ENCODE measurements at regions of chr22 and their contacts with region 1.

Region 1: GRCh38 chr22:24525416-24526037 is 29.4 kb downstream of the GUCD1 start:
- DNase-seq: peak; percentile 90
- ATAC-seq: peak; percentile 92
- H3K4me3 Mint-ChIP-seq: no peak overlapping the region
- H3K27ac Mint-ChIP-seq: no peak overlapping the region
- H3K4me1 Mint-ChIP-seq: peaks cover 8% of the 10 kb centered on the region
- H3K27me3 Mint-ChIP-seq: no peaks in the 10 kb centered on the region

Region 2: DNA sequence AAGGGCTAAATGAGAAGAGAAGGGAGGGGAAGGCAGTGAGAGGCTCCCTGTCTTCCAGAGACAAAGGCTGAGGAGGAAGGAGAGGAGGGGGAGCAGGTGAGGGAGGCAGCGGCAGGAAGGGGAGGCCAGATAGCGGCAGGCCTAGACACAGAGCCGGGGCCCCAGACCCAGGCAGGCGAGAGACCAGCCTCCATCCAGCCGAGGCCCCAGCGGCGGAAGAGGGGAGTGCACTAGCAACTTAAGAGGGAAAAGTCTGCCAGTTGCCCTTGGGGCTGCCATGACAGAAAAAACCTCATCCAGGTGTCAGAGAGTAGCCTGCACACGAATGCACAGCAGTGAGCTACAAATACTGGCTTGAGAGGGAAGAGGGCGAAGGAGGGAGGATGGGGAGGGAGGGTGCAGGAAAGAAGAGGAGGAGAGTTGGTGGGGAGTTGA is 992.2 kb before region 1 on chr22:
- CTCF ChIA-PET with region 1: no interaction called
- POLR2A ChIA-PET with region 1: no interaction called
- intact Hi-C with region 1: no loop called
- DNase-seq: peak; percentile 62
- ATAC-seq: peak; percentile 64
- H3K4me3 Mint-ChIP-seq: no peak overlapping the region
- H3K27ac Mint-ChIP-seq: no peak overlapping the region
- H3K4me1 Mint-ChIP-seq: no peaks in the 10 kb centered on the region
- H3K27me3 Mint-ChIP-seq: no peaks in the 10 kb centered on the region

Region 3: DNA sequence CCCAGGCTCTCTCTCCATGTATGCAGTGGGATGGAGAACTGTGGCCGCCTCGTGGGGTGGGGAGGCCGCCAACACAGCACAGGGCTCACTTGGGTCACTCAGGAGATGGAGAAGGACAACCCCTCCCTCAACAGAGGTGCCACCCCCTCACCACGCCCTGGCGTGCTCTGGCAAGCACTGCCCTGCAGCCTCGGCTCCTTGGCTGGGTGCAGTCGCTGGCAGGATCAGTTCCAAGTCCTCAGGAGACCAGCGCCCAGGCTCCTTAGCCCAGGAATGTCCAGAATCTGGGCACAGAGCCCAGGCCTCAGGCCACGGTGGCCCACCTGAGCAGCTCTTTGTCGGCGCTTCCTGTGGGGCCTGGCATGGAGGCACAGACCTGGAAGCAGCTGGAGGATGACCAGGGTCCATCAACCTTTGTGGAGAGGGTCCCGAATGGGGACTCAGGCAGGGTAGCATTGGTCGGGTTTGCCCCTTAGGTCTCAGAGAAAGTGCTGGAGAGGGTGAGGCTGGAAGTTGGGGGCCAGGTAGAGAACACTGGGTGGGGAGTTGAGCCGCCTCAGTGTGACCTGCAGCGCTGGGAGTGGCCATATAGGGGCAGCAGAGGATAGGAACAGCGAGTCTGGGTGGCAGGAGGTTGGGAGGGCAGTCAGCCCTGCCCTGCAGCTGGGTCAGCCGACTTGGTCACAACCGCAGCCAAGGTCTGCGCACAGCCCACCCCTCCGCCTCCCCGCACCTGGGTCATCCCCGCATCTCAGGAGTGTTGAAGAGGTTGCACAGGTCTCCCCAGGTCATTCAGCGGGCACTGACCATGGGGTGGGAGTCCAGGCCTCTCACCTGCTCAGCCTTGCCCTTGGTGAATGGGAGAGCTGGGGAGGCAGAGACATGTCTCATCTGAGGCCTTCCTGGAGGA is 336.0 kb before region 1 on chr22:
- CTCF ChIA-PET with region 1: interaction called, 3 read pairs
- POLR2A ChIA-PET with region 1: no interaction called
- intact Hi-C with region 1: loop called (anchors 5 to 10 kb)
- DNase-seq: peak; percentile 74
- ATAC-seq: peak; percentile 92
- H3K4me3 Mint-ChIP-seq: no peak overlapping the region
- H3K27ac Mint-ChIP-seq: no peak overlapping the region
- H3K4me1 Mint-ChIP-seq: no peaks in the 10 kb centered on the region
- H3K27me3 Mint-ChIP-seq: no peaks in the 10 kb centered on the region

Region 4: DNA sequence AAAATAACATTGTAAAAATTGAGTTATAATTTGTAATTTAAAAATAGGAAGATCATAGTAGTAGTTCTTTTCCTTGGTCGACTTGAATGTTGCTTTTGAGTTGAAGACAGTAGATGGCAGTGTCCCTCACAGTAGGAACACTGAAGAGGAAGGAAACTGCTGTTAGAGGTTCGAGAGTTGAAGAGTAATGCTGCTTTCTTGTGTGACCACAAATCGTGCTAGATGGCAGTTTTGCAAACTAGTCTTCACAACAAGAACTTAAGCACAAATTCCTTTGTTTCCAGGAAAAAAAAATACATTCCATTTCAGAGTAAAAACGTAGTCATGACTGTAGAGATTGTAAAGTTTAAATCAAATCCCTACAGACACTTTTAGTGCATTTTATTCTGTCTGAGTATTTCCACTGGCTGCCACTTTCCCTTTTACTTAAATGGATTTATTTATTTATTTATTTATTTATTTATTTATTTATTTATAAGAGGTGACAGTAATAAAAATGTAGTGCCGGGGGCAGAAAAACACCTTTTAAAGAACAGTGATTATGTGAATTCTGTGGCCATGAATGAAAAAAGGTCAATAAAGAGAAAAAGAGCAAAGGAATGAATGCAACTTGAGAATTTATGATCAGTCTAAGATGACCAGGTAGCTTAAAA is 200.3 kb before region 1 on chr22:
- CTCF ChIA-PET with region 1: interaction called, 4 read pairs
- POLR2A ChIA-PET with region 1: no interaction called
- intact Hi-C with region 1: loop called (anchors 1 kb)
- DNase-seq: peak; percentile 23
- ATAC-seq: peak; percentile 85
- H3K4me3 Mint-ChIP-seq: no peak overlapping the region
- H3K27ac Mint-ChIP-seq: peak overlapping the region; percentile 44
- H3K4me1 Mint-ChIP-seq: peaks cover 35% of the 10 kb centered on the region
- H3K27me3 Mint-ChIP-seq: no peaks in the 10 kb centered on the region

Region 5: DNA sequence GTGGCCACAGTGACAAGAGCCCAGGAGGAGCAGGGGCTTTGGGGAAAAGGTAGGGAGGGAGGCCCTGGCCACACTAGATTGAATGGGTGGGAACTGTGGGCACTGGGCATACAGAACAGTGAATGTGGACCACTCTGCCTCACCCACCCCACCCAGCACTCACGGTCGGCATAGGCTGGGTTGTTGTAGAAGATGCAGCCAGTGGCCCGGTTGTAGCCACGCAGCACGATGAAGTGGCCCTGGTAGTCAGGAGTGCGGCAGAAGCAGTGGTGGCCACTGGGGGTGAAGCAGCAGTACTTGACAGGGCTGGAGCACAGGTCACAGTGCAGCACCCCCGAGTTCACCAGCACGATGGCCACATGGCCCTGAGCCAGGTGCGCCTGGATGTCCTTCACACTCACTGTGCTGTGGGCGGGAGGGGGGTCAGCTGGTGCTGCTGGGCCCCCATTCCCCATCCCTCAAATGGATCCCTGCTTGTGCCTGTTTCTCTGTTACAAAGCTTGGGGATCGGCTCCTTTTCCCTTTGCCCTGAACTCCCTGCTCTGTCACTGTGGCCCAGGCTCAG is 18.2 kb after region 1 on chr22:
- CTCF ChIA-PET with region 1: interaction called, 10 read pairs
- POLR2A ChIA-PET with region 1: no interaction called
- intact Hi-C with region 1: no loop called
- DNase-seq: no peak
- ATAC-seq: no peak
- H3K4me3 Mint-ChIP-seq: no peak overlapping the region
- H3K27ac Mint-ChIP-seq: no peak overlapping the region
- H3K4me1 Mint-ChIP-seq: no peaks in the 10 kb centered on the region
- H3K27me3 Mint-ChIP-seq: no peaks in the 10 kb centered on the region

Measured in activated CD4-positive, alpha-beta T cell treated with anti-CD3 and anti-CD28 coated beads for 36 hours (primary cell).